Ovary (tissue), 10 donors: ENCODE measurements at regions of chr1 and their contacts with region 1.

Region 1: GRCh38 chr1:15272009-15272788 is 25.2 kb downstream of the FHAD1 start:
- DNase-seq: peak; percentile 58 to 75 (median 63)
- H3K4me3 ChIP-seq: no peak overlapping the region
- H3K27ac ChIP-seq: no peak overlapping the region
- H3K4me1 ChIP-seq: peaks cover 1% of the 10 kb centered on the region
- H3K27me3 ChIP-seq: no peaks in the 10 kb centered on the region
- CTCF ChIP-seq: peak; percentile 44 to 84 (median 80)
- EP300 ChIP-seq: no peak
- POLR2A ChIP-seq: no peak

Region 2: GRCh38 chr1:14923727-14924452 is 348.3 kb before region 1 on chr1:
- intact Hi-C with region 1: loop called in 1 of 4 experiments (anchors 10 kb)
- DNase-seq: peak; percentile 79 to 88 (median 80)
- H3K4me3 ChIP-seq: peak overlapping the region; percentile 67
- H3K27ac ChIP-seq: peak overlapping the region; percentile 64 to 94
- H3K4me1 ChIP-seq: peaks cover 19% of the 10 kb centered on the region
- H3K27me3 ChIP-seq: no peaks in the 10 kb centered on the region
- CTCF ChIP-seq: no peak
- EP300 ChIP-seq: no peak
- POLR2A ChIP-seq: no peak